Caki2 (cell line): ENCODE measurements at regions of chr16 and their contacts with region 1.

Region 1: DNA sequence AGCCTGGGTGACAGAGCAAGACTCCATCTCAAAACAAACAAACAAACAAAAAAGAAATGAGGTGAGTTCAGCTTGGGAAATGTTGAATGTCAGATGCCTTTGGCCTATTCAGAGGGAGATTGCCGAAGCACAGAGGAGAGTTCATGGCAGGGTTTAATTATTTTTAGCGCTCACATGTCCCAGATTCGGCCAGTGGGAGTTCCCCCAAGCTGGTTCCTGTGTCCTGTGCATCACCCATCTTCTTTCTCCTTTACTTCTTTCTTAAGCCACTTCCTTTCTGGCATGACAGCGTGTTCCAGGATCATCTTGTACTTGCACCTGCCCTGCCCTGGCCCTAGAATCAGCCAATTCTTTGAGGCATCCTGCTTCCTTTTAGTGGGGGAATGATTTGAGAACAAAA is 9.2 kb downstream of the MPV17L start:
- DNase-seq: no peak

Region 2: GRCh38 chr16:15502041-15502725 is 97.4 kb after region 1 on chr16:
- in situ Hi-C with region 1: loop called (anchors 25 kb)
- DNase-seq: peak; percentile 92